ENCODE measurements at regions of chr3 and their contacts with region 1.

Region 1: GRCh38 chr3:94004301-94004910 is 24.0 kb downstream of the STX19 start:
- DNase-seq: peak; percentile 71 to 80 (median 79)
- H3K4me3 ChIP-seq: peak overlapping the region in 5 of 7 experiments; percentile 25 to 74 (median 33)
- H3K27ac ChIP-seq: peak overlapping the region in 1 of 2 experiments; percentile 59
- H3K4me1 ChIP-seq: no peaks in the 10 kb centered on the region
- H3K27me3 ChIP-seq: no peaks in the 10 kb centered on the region

Region 2: DNA sequence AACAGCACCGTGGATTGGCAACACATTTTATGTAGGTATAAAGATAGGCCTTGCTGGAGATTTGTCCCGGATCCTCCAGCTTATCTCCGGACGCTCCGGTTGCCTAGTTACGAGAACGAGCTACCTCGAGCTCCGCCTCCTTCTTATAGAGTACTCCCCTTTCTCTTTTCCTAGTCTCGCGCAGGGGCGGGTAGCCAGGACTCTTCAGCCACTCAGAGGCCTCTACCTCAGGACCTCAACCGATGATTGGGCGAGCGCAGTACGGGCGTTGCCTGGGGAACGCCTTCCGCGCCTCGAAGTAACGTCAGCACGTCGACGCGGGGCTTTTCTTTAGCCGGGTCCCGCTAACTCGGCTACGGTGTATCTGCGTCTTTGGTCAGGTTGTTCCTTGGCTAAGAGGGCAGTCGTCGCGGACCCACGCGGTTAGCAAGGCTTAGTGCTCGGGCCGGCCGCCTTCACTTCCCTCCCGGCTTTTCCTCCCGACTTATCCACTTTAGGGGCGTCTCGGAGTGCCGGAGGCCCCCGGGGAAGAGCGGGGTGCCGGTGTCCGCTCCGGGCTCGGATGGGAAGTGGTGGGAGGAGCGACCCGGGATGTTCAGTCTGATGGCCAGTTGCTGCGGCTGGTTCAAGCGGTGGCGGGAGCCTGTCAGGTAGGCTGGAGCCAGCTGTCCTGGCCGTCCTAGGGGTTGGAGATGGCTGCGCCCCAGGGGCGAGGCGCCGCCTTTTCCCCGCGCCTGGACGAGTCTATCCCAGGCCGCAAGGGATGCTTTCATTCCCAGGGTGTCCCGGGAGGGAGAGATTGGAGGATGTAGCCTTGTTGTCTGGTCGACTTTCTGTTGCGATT is 24.4 kb before region 1 on chr3 and contains the start of gene ARL13B:
- CTCF ChIA-PET with region 1: no interaction called
- POLR2A ChIA-PET with region 1: no interaction called
- DNase-seq: peak; percentile 97 to 98 (median 98)
- H3K4me3 ChIP-seq: peak within 1 kb of the TSS; percentile 80 to 97 (median 89)
- H3K27ac ChIP-seq: peak within 1 kb of the TSS; percentile 79 to 93
- H3K4me1 ChIP-seq: peaks cover 0 to 22% (median 10%) of the 10 kb centered on the region in 4 experiments
- H3K27me3 ChIP-seq: no peaks in the 10 kb centered on the region

Region 3: GRCh38 chr3:94069194-94069813 is 64.9 kb after region 1 on chr3:
- CTCF ChIA-PET with region 1: interaction called, 42 read pairs
- POLR2A ChIA-PET with region 1: no interaction called
- DNase-seq: peak; percentile 15 to 49 (median 48)
- H3K4me3 ChIP-seq: no peak overlapping the region
- H3K27ac ChIP-seq: no peak overlapping the region
- H3K4me1 ChIP-seq: peaks cover 0 to 10% (median 3%) of the 10 kb centered on the region in 4 experiments
- H3K27me3 ChIP-seq: no peaks in the 10 kb centered on the region

Region 4: DNA sequence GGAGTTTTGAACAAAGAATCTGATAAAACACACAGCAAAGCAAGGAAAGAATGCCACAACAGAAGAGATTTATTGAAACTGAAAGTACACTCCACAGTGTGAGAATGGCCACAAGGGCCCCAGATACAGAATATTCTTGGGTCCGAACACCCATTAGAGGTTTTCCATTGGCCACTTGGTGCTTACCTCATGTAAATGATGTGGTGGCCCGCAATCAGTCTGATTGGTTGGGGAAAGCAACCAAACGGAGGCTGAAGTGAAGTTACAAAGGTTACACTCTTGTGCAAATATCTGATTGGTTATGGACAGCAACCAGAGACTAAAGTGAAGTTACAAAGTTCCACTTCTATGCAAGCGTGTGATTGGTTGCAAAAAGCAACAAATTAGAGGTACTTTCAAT is 78.9 kb after region 1 on chr3:
- CTCF ChIA-PET with region 1: no interaction called
- POLR2A ChIA-PET with region 1: no interaction called
- DNase-seq: no peak
- H3K4me3 ChIP-seq: no peak overlapping the region
- H3K27ac ChIP-seq: no peak overlapping the region
- H3K4me1 ChIP-seq: peaks cover 0 to 5% (median 0%) of the 10 kb centered on the region in 4 experiments
- H3K27me3 ChIP-seq: no peaks in the 10 kb centered on the region

Measured in common myeloid progenitor, CD34-positive (primary cell).